Posterior vena cava (tissue), 2 donors: ENCODE measurements at regions of chr18 and their contacts with region 1.

Region 1: GRCh38 chr18:48765053-48765452 is 185.7 kb downstream of the SMAD7 start:
- DNase-seq: no peak

Region 2: GRCh38 chr18:48742706-48743475 is 22.2 kb before region 1 on chr18:
- intact Hi-C with region 1: loop called in 1 of 2 experiments (anchors 1 kb)
- DNase-seq: peak; percentile 91